ENCODE measurements at regions of chr19 and their contacts with region 1.

Region 1: DNA sequence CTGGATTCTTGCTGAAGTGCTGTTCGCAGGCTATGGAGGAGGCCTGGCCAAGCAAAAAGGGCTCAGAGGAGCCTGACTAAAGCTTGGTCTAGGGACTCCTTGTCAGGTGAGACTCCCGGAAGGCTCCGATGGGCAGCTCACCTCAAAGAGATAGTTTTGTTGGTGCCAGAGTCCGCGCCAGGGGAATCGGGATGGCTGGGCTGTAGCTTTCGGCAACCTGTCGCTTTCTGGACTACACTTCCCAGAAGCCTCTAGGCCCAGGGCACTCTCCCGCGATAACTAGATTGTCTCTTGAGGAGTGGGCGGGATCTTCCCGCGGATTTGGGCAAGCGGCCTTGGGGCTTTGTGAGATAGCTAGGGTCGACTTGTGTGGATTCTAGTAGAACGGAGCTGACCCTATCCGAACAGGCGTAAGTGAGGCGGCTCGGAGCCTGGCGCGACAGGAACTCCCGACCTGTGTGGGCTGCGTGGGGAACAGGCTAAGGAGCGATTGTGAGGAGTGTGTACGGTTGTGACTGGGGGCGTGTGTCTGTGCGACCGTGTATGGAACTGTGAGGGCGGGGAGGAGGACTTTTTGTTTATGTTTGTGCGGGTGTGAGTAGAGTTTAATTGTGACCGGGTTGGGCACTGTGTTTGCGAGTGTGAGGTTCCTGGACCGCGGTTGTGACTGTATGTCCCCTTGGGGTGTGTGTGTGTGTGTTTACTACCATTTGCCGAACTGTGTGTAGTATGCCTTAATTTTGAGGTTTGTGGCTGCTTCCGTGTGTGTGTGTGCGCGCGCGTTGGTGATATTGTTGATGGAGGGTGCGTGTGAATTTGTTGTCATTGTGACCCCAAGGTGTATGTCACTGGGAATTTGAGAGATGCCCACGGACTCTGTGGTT is at the start of gene ZNF345:
- DNase-seq: peak; percentile 91 to 94
- ATAC-seq: peak; percentile 97 to 98 (median 98)
- H3K4me3 ChIP-seq: peak within 1 kb of the TSS; percentile 99
- H3K27ac ChIP-seq: peak within 1 kb of the TSS; percentile 93
- H3K4me1 ChIP-seq: peaks cover 13% of the 10 kb centered on the region
- H3K27me3 ChIP-seq: no peaks in the 10 kb centered on the region
- CTCF ChIP-seq: no peak
- total RNA-seq, gene ZNF345: 0.76 to 2.3 (median 1.5) TPM

Region 2: GRCh38 chr19:36687214-36688056 is 163.4 kb before region 1 on chr19 and contains the start of gene ZNF567:
- intact Hi-C with region 1: loop called in 1 of 2 experiments (anchors 10 kb)
- DNase-seq: peak; percentile 98
- ATAC-seq: peak; percentile 99 to 100 (median 100)
- H3K4me3 ChIP-seq: peak within 1 kb of the TSS; percentile 84
- H3K27ac ChIP-seq: peak within 1 kb of the TSS; percentile 72
- H3K4me1 ChIP-seq: peaks cover 13% of the 10 kb centered on the region
- H3K27me3 ChIP-seq: no peaks in the 10 kb centered on the region
- CTCF ChIP-seq: no peak
- total RNA-seq, gene ZNF567: 1.8 to 3.6 (median 2.3) TPM

Region 3: GRCh38 chr19:36915992-36916830 is 65.4 kb after region 1 on chr19 and contains the starts of genes ZNF568 and ZNF829:
- intact Hi-C with region 1: loop called (anchors 5 kb)
- DNase-seq: peak; percentile 88 to 95
- ATAC-seq: peak; percentile 96 to 99 (median 98)
- H3K4me3 ChIP-seq: peak within 1 kb of the TSS; percentile 95
- H3K27ac ChIP-seq: peak within 1 kb of the TSS; percentile 97
- H3K4me1 ChIP-seq: no peaks in the 10 kb centered on the region
- H3K27me3 ChIP-seq: no peaks in the 10 kb centered on the region
- CTCF ChIP-seq: peak; percentile 57
- total RNA-seq, gene ZNF568: 4.8 to 13.9 (median 7.3) TPM
- total RNA-seq, gene ZNF829: 0.92 to 1.5 (median 1.1) TPM